ENCODE measurements at regions of chr3 and their contacts with region 1.

Region 1: DNA sequence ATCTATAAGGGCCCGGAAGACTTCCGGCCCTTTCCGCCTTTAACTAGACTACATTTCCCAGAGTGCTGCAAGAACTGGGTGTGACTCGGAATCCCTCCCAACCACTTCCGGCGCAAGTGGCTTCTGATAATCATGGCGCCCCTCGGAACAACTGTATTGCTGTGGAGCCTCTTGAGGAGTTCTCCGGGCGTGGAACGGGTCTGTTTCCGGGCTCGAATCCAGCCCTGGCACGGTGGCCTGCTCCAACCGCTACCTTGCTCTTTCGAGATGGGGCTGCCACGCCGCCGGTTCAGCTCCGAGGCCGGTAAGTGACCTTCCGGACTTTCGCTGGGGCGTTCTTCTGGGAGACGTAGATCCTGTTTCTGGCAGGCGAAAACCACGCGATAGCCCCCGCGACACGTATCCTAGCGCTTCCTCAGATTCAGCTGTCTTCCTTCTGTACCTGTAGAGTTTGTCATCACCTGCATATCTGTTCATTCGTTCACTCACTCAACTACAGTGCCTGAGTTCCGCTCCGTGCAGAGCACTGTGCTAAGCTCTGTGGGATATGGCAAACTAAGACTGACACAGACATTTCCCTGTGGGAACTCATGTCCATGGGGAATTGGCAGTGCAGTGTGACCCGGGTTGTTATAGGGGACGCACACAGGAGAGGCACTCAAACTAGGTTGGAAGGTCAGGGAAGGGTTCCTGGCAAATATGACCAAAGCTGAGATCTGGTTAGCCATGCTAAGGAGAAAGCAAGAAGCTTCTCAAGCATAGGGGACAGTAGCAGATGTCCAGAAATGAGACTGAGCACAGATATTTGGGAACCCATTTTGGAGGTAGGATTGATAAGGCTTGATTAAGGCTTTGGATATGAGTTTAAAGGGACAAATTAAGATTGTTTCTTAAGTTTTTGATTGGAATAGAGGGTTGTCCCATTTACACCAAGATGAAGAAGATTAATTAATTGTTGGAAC is at the start of gene MRPS22:
- DNase-seq: peak; percentile 79
- H3K4me3 Mint-ChIP-seq: no peak within 1 kb of the TSS
- H3K27ac Mint-ChIP-seq: peak within 1 kb of the TSS; percentile 87
- H3K4me1 Mint-ChIP-seq: peaks cover 14% of the 10 kb centered on the region
- H3K27me3 Mint-ChIP-seq: peaks cover 3% of the 10 kb centered on the region
- total RNA-seq, gene MRPS22: 48.4 and 54.7 TPM in 2 replicates

Region 2: GRCh38 chr3:138174421-138175122 is 1169.6 kb before region 1 on chr3 and contains the start of gene DBR1:
- intact Hi-C with region 1: loop called (anchors 5 kb)
- DNase-seq: peak; percentile 68
- H3K4me3 Mint-ChIP-seq: peak within 1 kb of the TSS; percentile 98
- H3K27ac Mint-ChIP-seq: peak within 1 kb of the TSS; percentile 94
- H3K4me1 Mint-ChIP-seq: peaks cover 42% of the 10 kb centered on the region
- H3K27me3 Mint-ChIP-seq: peaks cover 7% of the 10 kb centered on the region
- total RNA-seq, gene DBR1: 25.7 and 31.0 TPM in 2 replicates

Region 3: DNA sequence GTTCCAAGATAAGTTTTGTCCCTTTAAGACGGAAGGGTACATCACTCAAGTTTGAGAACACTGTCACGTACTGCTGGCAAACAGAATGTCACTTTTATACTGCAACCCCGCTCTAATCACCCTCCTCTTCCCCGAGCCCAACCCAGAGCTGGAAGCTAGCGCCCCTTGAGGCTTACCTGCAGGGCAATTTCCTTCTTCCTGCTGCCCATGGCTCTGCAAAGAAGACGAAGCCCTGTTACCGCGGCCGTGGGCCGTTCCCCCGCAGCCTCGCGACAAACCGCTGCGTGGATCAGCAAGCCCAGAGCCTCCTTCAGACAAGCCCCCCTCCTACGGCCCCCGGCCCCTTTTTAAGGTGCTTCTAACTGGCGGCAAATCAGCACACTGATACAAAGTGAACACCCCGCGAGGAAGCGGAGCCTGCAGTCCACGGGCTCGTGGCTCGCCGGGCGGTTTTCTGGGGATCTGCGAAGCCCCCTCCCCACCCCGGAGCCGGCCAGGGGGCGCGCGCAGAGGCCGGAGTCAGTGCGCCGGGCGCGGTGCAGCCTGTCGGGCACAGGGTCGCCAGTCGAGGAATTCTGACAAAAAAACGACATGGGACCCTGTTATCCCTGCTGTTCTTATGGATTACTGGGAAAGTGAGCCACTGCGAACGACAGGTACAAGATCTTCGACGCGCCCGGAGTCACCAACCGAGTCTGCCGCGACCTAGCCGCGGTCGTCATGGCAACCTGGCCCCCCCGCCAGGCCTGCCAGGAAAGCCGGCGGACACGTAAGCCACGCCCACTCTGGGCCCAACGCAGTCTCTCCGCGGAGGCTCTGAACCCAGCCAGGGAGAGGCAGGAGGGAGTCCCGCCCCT is 1014.8 kb before region 1 on chr3 and contains the start of gene NME9:
- intact Hi-C with region 1: loop called (anchors 10 kb)
- DNase-seq: peak; percentile 83
- H3K4me3 Mint-ChIP-seq: peak within 1 kb of the TSS; percentile 87
- H3K27ac Mint-ChIP-seq: peak within 1 kb of the TSS; percentile 68
- H3K4me1 Mint-ChIP-seq: peaks cover 33% of the 10 kb centered on the region
- H3K27me3 Mint-ChIP-seq: peaks cover 2% of the 10 kb centered on the region
- total RNA-seq, gene NME9: not detected in 2 replicates

Region 4: GRCh38 chr3:138705675-138706074 is 638.5 kb before region 1 on chr3:
- intact Hi-C with region 1: loop called (anchors 10 kb)
- DNase-seq: no peak
- H3K4me3 Mint-ChIP-seq: no peak overlapping the region
- H3K27ac Mint-ChIP-seq: no peak overlapping the region
- H3K4me1 Mint-ChIP-seq: no peaks in the 10 kb centered on the region
- H3K27me3 Mint-ChIP-seq: no peaks in the 10 kb centered on the region

Region 5: DNA sequence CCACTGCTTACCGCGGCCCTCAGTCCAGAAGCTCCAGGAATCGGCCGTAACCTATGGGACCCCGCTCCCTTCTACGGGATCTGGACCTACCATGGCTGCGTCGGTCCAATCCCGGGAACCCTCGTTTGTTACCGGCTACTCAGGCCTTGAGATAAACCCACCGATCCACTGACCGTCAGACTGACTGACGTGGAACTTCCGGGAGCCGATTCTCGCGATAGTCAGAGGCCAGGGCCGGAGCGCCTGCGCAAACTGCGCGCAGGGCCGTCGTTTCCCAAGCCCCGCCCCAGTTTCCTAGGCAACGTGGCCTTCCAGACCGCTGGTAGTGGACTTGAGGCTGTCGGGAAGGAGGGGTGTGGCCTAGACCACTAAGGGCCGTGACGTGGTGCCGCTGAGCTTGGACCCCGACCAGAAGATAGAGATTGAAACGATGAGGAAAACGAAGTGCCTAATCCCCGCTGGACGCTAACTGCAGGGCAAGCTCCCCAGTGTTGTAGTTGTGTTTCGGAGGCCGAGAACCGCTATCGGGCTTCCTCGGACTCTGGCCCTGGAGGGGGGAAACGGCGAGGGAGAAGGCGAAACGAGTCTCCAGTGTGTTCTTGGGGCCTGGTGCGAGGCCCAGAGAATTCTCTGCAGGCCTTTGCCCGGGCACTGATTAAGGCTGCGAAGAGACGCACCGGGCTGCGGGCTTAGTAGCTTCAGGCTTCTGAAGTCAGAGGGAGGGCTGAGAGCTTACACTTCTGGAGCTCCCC is 45.5 kb after region 1 on chr3 and contains the start of gene COPB2:
- intact Hi-C with region 1: loop called (anchors 1 kb)
- DNase-seq: peak; percentile 96
- H3K4me3 Mint-ChIP-seq: peak within 1 kb of the TSS; percentile 91
- H3K27ac Mint-ChIP-seq: peak within 1 kb of the TSS; percentile 96
- H3K4me1 Mint-ChIP-seq: peaks cover 52% of the 10 kb centered on the region
- H3K27me3 Mint-ChIP-seq: no peaks in the 10 kb centered on the region
- total RNA-seq, gene COPB2: 96.9 and 103 TPM in 2 replicates

Region 6: GRCh38 chr3:140941434-140942220 is 1597.5 kb after region 1 on chr3 and contains the start of gene SLC25A36:
- intact Hi-C with region 1: loop called (anchors 5 kb)
- DNase-seq: peak; percentile 95
- H3K4me3 Mint-ChIP-seq: peak within 1 kb of the TSS; percentile 92
- H3K27ac Mint-ChIP-seq: peak within 1 kb of the TSS; percentile 95
- H3K4me1 Mint-ChIP-seq: peaks cover 36% of the 10 kb centered on the region
- H3K27me3 Mint-ChIP-seq: peaks cover 12% of the 10 kb centered on the region
- total RNA-seq, gene SLC25A36: 49.5 and 52.3 TPM in 2 replicates